CD4-positive, alpha-beta memory T cell (primary cell): ENCODE measurements at regions of chrX and their contacts with region 1.

Region 1: DNA sequence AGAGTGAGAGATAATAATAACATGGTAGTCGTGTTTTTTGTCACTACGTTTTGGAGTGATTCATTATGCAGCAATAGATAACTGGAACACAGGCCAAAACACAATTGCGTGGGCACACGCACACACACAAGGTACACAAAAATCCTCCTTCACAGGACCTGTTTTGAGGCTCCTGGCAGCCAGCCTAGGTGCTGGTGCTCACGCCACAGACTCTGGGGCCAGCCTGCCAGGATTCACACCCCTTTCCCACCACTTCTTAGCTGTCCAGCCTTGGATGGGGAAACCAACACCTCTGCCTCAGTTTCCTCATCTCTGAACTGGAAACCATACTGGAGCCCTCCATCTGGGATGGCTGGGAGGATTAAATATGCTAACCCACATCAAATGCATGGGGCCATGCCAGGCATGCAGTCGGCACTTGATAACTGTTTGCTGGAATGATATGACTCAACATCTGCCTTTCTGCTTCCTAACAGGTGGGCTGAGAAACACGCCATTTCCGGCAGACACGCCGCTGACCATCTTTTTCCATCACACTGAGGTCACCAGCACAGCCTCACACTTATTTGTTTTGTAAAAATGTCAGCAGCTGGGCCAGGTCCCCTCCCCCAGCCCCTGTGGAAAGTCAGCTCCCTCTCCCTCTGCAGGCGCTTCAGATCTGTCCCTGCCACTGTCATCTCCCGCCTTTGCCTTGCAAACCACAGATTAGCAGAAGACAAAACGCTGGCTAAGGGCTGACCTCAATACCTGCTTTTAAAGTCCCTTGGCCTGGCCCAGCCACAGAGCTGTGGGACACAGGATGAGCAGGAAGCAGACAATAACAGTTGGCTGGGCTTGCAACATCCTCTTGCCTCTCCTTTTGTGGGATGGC is 237.5 kb downstream of the BCOR start:
- DNase-seq: peak; percentile 28 to 90 (median 38)
- H3K4me3 ChIP-seq: no peak overlapping the region
- H3K4me3 Mint-ChIP-seq: peak overlapping the region in 5 of 8 donors; percentile 12 to 67 (median 58)
- H3K27ac ChIP-seq: no peak overlapping the region
- H3K27ac Mint-ChIP-seq: peak overlapping the region; percentile 19 to 98 (median 69)
- H3K4me1 ChIP-seq: peaks cover 28% of the 10 kb centered on the region
- H3K4me1 Mint-ChIP-seq: peaks cover 13 to 49% (median 29%) of the 10 kb centered on the region in 4 donors
- H3K27me3 ChIP-seq: no peaks in the 10 kb centered on the region
- H3K27me3 Mint-ChIP-seq: no peaks in the 10 kb centered on the region

Region 2: DNA sequence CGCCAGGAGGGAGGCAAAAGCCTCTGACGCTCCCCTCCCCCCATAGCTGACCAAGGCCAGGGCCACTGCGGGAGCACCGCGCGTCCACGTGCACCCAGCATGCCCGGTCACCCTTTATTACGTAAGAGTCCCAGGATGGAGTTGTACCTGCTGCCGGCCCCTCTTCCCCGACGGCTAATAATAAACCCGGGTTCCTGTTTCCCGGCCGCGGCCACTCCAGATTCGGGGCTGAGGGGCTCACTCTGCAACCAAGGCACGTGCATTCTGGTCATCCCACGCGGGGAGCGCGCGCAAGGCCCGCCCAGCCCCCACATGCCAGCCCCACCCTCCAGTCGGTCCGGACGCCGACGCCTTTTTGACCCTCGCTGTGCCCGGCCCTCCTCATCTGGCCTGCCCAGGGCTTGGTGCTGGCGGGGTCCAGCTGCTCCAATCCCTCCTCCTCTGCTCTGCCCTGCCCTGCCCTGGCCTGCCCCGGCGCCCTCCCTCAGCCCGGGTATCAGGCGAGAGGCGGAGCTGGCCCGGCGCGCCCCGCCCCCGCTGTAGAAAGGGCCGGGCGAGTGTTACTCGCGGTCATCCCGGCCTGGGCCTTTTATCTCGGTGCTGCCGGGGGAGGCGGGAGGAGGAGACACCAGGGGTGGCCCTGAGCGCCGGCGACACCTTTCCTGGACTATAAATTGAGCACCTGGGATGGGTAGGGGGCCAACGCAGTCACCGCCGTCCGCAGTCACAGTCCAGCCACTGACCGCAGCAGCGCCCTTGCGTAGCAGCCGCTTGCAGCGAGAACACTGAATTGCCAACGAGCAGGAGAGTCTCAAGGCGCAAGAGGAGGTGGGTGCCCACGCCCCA is 1056.4 kb before region 1 on chrX:
- CTCF ChIA-PET with region 1: no interaction called
- POLR2A ChIA-PET with region 1: no interaction called
- intact Hi-C with region 1: loop called (anchors 10 kb)
- DNase-seq: peak; percentile 54 to 67 (median 58)
- H3K4me3 ChIP-seq: peak overlapping the region; percentile 65 to 72
- H3K4me3 Mint-ChIP-seq: peak overlapping the region; percentile 85 to 95 (median 92)
- H3K27ac ChIP-seq: peak overlapping the region; percentile 80
- H3K27ac Mint-ChIP-seq: peak overlapping the region; percentile 86 to 95 (median 93)
- H3K4me1 ChIP-seq: peaks cover 26% of the 10 kb centered on the region
- H3K4me1 Mint-ChIP-seq: peaks cover 11 to 62% (median 24%) of the 10 kb centered on the region in 4 donors
- H3K27me3 ChIP-seq: no peaks in the 10 kb centered on the region
- H3K27me3 Mint-ChIP-seq: no peaks in the 10 kb centered on the region

Region 3: DNA sequence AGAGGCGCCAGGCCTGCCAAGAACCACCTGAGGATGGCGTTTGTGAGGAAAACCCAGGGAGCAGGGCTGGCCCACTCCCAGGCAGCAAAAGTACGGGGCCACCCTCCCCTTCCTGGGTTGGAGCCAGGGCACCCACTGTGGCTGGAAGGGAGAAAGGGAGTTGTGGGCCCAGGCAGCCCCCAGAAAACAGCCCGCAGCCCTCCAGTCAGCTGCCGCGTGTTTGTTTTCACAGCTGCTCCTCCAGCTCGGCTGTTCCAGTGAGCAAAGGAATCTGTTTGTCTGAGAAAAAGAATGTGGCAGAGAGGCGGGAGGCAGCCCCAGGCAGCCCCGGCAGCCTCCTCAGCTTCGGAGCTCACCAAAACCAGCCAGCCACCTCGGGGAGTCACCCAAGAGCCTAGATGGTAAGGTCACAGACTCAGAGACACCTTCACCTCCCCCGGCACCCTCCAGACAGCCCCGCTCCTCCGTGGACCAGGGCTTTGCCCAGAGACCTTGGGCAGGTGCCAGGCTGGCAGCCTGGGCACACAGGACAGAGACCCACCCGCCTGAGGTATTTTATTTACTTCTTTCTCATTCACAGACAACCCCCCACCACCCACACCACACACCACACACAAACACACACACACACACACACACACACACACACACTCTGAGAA is 100.6 kb before region 1 on chrX:
- CTCF ChIA-PET with region 1: no interaction called
- POLR2A ChIA-PET with region 1: no interaction called
- intact Hi-C with region 1: no loop called
- DNase-seq: no peak
- H3K4me3 ChIP-seq: no peak overlapping the region
- H3K4me3 Mint-ChIP-seq: no peak overlapping the region
- H3K27ac ChIP-seq: no peak overlapping the region
- H3K27ac Mint-ChIP-seq: no peak overlapping the region
- H3K4me1 ChIP-seq: no peaks in the 10 kb centered on the region
- H3K4me1 Mint-ChIP-seq: peaks cover 0 to 4% (median 2%) of the 10 kb centered on the region in 4 donors
- H3K27me3 ChIP-seq: no peaks in the 10 kb centered on the region
- H3K27me3 Mint-ChIP-seq: no peaks in the 10 kb centered on the region

Region 4: DNA sequence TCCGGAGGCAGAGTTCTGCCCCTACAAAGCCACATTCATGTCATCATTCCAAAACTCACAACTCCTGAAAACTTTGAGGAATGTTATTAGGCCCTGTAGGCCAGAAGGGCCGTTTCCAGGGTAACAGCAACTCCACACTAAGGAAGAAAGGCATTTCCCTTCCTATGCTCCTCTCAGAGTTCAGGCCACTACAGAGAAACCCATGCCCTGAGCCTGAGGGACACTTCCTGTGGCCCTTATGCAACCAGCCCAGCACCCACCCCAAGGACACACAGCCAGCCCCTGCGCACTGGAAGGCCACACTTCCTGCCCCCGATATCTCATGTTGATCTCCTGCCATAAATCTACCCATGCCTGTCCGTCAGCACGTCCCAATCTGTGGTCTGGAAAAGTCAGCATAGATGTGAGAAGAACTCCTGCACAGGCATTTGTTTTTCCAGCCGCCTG is 51.7 kb before region 1 on chrX:
- CTCF ChIA-PET with region 1: no interaction called
- POLR2A ChIA-PET with region 1: no interaction called
- intact Hi-C with region 1: no loop called
- DNase-seq: no peak
- H3K4me3 ChIP-seq: no peak overlapping the region
- H3K4me3 Mint-ChIP-seq: no peak overlapping the region
- H3K27ac ChIP-seq: no peak overlapping the region
- H3K27ac Mint-ChIP-seq: peak overlapping the region in 1 of 7 donors; percentile 23
- H3K4me1 ChIP-seq: no peaks in the 10 kb centered on the region
- H3K4me1 Mint-ChIP-seq: no peaks in the 10 kb centered on the region
- H3K27me3 ChIP-seq: no peaks in the 10 kb centered on the region
- H3K27me3 Mint-ChIP-seq: no peaks in the 10 kb centered on the region

Region 5: GRCh38 chrX:39820938-39821708 is 39.1 kb before region 1 on chrX:
- CTCF ChIA-PET with region 1: no interaction called
- POLR2A ChIA-PET with region 1: interaction called, 5 read pairs
- intact Hi-C with region 1: loop called (anchors 2 kb)
- DNase-seq: no peak
- H3K4me3 ChIP-seq: no peak overlapping the region
- H3K4me3 Mint-ChIP-seq: peak overlapping the region; percentile 49 to 74 (median 64)
- H3K27ac ChIP-seq: no peak overlapping the region
- H3K27ac Mint-ChIP-seq: no peak overlapping the region
- H3K4me1 ChIP-seq: peaks cover 8% of the 10 kb centered on the region
- H3K4me1 Mint-ChIP-seq: peaks cover 5 to 13% (median 7%) of the 10 kb centered on the region in 4 donors
- H3K27me3 ChIP-seq: no peaks in the 10 kb centered on the region
- H3K27me3 Mint-ChIP-seq: no peaks in the 10 kb centered on the region

Region 6: DNA sequence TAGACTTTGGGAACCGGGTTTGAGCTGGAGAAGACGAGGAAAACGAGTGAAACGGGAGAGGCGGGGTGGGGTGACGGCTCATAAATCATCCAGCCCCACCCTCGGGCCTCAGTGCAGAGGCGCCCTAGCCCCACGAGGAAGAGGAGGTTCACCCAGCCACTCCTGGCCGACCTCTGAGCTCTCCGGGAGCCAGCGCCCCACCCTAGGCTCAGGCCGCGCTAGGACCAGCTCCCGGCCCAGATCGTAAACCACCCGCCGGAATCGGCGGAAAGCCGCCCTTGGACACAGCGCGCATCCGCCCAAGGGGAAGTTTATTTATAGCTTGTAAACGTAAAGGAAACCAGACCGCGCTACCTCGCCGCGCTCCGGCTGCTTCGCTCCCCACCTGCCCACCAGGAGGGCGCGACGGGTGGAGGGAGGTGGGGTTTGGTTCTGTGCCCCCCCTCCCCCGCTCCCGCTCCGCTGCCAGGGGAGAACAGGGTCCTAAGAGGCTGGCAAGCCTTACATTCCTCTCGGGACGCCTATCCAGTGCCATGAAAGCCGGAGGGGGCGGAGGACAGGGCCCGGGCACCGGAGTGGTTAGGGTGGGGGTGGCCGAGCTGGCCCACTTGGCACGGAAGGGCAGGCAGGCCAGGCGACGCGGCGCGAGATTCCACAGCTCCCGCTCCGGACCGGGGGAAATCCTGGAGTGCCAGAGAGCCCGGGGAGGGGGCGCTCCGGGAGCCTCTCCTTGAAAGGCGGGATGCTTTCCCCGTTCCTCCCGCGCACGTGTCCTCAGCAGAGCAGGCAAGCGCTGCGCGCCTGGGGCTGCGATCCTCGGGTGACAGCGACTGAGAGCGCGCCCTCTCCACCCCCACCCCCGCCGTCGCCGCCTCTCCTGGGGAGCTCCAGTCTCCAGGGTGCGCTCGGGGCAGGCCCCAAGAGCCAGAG is 153.3 kb after region 1 on chrX:
- CTCF ChIA-PET with region 1: no interaction called
- POLR2A ChIA-PET with region 1: no interaction called
- intact Hi-C with region 1: loop called (anchors 5 kb)
- DNase-seq: peak in 2 of 5 donors; percentile 28 to 31
- H3K4me3 ChIP-seq: peak overlapping the region in 1 of 2 donors; percentile 49
- H3K4me3 Mint-ChIP-seq: peak overlapping the region; percentile 64 to 84 (median 78)
- H3K27ac ChIP-seq: no peak overlapping the region
- H3K27ac Mint-ChIP-seq: peak overlapping the region in 2 of 7 donors; percentile 40 to 60
- H3K4me1 ChIP-seq: peaks cover 22% of the 10 kb centered on the region
- H3K4me1 Mint-ChIP-seq: peaks cover 4 to 26% (median 16%) of the 10 kb centered on the region in 4 donors
- H3K27me3 ChIP-seq: no peaks in the 10 kb centered on the region
- H3K27me3 Mint-ChIP-seq: peaks cover 3 to 5% of the 10 kb centered on the region in 2 donors

Region 7: DNA sequence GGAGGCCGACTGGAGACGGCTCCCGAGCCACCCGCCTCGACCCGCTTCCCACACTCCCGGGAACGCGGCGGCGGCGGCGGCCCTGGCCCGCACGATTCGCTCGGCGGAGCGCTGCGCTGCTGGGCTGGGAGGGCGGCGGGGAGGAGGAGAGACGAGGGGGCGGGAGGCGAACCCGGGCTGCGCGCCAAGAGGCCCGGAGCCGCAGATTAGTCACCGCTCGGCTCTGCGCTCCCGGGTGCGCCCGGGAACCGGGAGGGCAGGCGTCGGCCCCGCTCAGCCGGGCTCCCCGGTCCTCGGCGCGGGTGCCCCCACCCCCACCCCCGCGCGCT is 248.7 kb after region 1 on chrX:
- CTCF ChIA-PET with region 1: no interaction called
- POLR2A ChIA-PET with region 1: no interaction called
- intact Hi-C with region 1: loop called (anchors 5 kb)
- DNase-seq: peak; percentile 57 to 72 (median 60)
- H3K4me3 ChIP-seq: peak overlapping the region in 1 of 2 donors; percentile 19
- H3K4me3 Mint-ChIP-seq: peak overlapping the region in 4 of 8 donors; percentile 60 to 75 (median 66)
- H3K27ac ChIP-seq: no peak overlapping the region
- H3K27ac Mint-ChIP-seq: no peak overlapping the region
- H3K4me1 ChIP-seq: peaks cover 20% of the 10 kb centered on the region
- H3K4me1 Mint-ChIP-seq: peaks cover 3 to 18% (median 12%) of the 10 kb centered on the region in 4 donors
- H3K27me3 ChIP-seq: no peaks in the 10 kb centered on the region
- H3K27me3 Mint-ChIP-seq: no peaks in the 10 kb centered on the region

Region 8: DNA sequence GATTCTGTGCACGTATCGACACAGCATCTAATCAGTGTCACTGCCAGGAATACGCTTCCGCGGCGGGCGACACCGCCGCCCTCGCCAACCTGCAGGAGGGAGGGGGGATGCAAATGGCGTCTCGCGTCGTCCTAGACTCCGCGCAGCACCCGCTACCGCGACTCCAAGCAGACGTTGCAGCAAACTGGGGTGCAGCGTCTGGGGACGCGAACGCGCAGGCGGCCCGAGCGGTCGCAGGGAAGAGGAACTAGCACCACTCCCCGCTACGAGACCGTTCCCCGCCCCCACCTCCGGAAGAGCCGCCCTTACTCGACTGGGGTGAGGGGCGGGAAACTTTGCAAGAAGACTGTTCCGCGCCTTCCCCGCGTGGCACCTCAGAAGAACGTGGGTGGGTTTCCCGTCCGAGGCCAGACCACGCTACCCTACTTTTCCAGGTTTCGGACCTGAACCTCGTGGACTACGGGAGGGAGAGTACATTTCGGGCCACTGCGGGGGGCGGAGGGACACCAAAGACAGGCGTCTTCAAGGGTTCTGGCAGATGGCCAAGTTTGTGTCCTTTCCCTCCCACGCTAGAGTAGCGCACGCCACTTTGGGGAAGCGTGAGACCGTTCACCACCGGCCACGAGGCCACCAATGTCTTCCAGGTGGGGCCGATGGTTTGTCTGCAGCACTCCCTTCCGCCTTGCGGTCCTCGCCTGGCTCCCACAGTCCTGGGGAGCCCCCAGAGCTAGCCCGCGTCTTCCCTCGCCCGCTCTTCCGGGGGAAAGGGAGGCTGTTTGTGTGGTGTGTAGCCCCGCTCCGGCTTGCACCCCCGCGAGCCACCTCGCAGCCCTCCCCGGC is 315.5 kb after region 1 on chrX:
- CTCF ChIA-PET with region 1: interaction called, 3 read pairs
- POLR2A ChIA-PET with region 1: interaction called, 24 read pairs
- intact Hi-C with region 1: loop called (anchors 2 kb)
- DNase-seq: peak; percentile 81 to 85 (median 84)
- H3K4me3 ChIP-seq: peak overlapping the region; percentile 23 to 67
- H3K4me3 Mint-ChIP-seq: peak overlapping the region; percentile 84 to 94 (median 92)
- H3K27ac ChIP-seq: peak overlapping the region; percentile 84
- H3K27ac Mint-ChIP-seq: peak overlapping the region; percentile 97 to 100 (median 98)
- H3K4me1 ChIP-seq: peaks cover 29% of the 10 kb centered on the region
- H3K4me1 Mint-ChIP-seq: peaks cover 17 to 51% (median 24%) of the 10 kb centered on the region in 4 donors
- H3K27me3 ChIP-seq: no peaks in the 10 kb centered on the region
- H3K27me3 Mint-ChIP-seq: no peaks in the 10 kb centered on the region